ENCODE measurements at regions of chr17 and their contacts with region 1.

Region 1: GRCh38 chr17:78258323-78259191 is 27.1 kb downstream of the TMEM235 start:
- DNase-seq: peak; percentile 63 to 92 (median 83)
- ATAC-seq: peak; percentile 66
- H3K4me3 ChIP-seq: peak overlapping the region; percentile 56
- H3K4me3 Mint-ChIP-seq: peak overlapping the region; percentile 93
- H3K27ac ChIP-seq: peak overlapping the region; percentile 71 to 75
- H3K27ac Mint-ChIP-seq: peak overlapping the region; percentile 98
- H3K4me1 ChIP-seq: peaks cover 97% of the 10 kb centered on the region
- H3K4me1 Mint-ChIP-seq: peaks cover 80% of the 10 kb centered on the region
- H3K27me3 ChIP-seq: no peaks in the 10 kb centered on the region
- H3K27me3 Mint-ChIP-seq: no peaks in the 10 kb centered on the region
- CTCF ChIP-seq: no peak

Region 2: DNA sequence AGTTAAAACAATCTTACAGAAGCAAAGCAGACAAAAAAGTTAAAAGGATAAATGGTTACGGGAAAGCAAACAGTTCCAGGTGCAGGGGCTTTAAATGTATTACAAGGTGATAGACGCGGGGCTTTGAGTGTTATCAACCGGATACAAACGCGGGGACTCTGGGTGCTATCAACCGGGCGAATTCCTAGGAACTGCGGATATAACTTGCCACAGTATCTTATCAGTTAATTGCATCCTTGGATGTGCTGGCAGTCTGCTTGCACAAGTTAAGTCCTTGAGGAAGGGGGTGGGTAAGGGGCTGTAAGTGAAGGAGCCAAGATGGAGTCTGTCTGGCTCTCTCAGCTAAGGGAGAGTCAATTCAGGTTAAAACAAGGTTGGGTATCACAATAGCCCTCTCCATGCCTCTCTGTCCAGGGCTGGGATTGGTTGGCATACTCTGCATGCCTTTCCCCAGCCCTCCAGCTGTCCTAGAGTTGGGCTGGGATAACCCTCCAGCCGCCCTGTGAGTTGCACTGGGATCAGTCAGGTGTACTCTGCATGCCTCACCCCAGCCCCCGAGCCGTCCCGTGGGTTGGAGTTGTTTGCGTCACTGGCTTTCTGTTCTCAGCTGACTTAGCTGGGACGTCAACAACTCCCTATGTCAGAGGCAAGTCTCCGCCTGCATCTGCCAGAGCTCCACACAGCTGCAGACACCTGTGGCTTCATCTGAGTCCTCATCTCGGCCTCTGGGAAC is 13.8 kb after region 1 on chr17:
- CTCF ChIA-PET with region 1: interaction called, 3 read pairs
- POLR2A ChIA-PET with region 1: interaction called, 15 read pairs
- intact Hi-C with region 1: loop called in 1 of 2 experiments (anchors 1 kb)
- DNase-seq: peak; percentile 47 to 88 (median 64)
- ATAC-seq: peak; percentile 90
- H3K4me3 ChIP-seq: no peak overlapping the region
- H3K4me3 Mint-ChIP-seq: peak overlapping the region; percentile 59
- H3K27ac ChIP-seq: peak overlapping the region in 1 of 2 donors; percentile 30
- H3K27ac Mint-ChIP-seq: peak overlapping the region; percentile 95
- H3K4me1 ChIP-seq: peaks cover 50% of the 10 kb centered on the region
- H3K4me1 Mint-ChIP-seq: peaks cover 48% of the 10 kb centered on the region
- H3K27me3 ChIP-seq: no peaks in the 10 kb centered on the region
- H3K27me3 Mint-ChIP-seq: no peaks in the 10 kb centered on the region
- CTCF ChIP-seq: no peak